Heart left ventricle (tissue), 16 donors: ENCODE measurements at regions of chr12 and their contacts with region 1.

Region 1: GRCh38 chr12:14365294-14366208 is at the start of gene ATF7IP:
- DNase-seq: peak; percentile 96 to 97 (median 97)
- ATAC-seq: peak; percentile 97 to 99 (median 98)
- H3K4me3 ChIP-seq: peak within 1 kb of the TSS; percentile 52 to 84 (median 69)
- H3K27ac ChIP-seq: peak within 1 kb of the TSS; percentile 90 to 98 (median 95)
- H3K4me1 ChIP-seq: peaks cover 0 to 25% (median 7%) of the 10 kb centered on the region in 12 donors
- H3K27me3 ChIP-seq: no peaks in the 10 kb centered on the region
- CTCF ChIP-seq: peak in 9 of 12 donors; percentile 21 to 59 (median 34)
- POLR2A ChIP-seq: peak in 1 of 2 donors; percentile 85
- total RNA-seq, gene ATF7IP: 39.8 to 82.4 (median 63.6) TPM

Region 2: DNA sequence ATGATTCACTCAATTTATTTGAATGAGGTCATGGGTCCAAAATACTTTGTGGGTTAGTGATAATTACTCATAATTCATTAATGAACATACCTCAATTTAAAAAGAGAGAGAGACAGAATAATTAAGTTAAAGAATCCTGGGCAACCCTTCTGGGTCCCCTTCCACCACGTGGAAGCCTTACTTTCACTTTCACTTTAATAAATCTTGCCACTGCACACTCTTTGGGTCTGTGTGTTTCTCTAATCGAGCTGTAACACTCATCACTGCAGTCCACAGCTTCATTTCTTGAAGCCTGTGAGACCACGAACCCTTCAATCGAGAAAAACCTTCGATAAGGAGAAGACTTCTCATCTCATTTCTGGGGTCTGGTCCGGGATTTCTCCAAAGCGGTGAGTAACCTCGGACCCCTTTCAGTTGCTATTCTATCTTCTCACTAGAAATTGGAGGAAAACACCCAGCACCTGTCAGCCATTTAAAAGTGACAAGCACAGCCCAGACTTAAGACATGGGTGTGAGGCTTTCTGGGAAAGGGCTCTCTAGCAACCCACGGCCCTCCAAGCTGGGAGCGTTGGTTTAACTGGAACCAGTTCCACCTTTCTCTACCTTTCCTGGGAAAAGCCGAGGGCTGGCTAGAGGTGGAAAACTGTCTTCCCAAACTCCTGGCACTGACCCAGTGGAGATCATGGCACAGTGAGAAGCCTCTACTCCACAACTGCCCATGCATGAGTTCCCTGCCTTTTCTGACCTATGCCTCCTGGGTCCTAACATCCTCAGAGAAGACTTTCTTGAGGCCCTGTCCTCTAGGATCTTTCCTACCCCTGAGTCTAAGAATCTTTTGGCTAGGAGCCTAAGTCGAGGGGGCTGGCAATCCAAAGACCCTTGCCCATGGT is 148.9 kb before region 1 on chr12:
- intact Hi-C with region 1: no loop called
- DNase-seq: no peak
- ATAC-seq: no peak
- H3K4me3 ChIP-seq: peak overlapping the region in 8 of 12 donors; percentile 4 to 39 (median 15)
- H3K27ac ChIP-seq: peak overlapping the region in 1 of 12 donors; percentile 28
- H3K4me1 ChIP-seq: peaks cover 0 to 6% (median 0%) of the 10 kb centered on the region in 12 donors
- H3K27me3 ChIP-seq: no peaks in the 10 kb centered on the region
- CTCF ChIP-seq: no peak
- POLR2A ChIP-seq: no peak

Region 3: DNA sequence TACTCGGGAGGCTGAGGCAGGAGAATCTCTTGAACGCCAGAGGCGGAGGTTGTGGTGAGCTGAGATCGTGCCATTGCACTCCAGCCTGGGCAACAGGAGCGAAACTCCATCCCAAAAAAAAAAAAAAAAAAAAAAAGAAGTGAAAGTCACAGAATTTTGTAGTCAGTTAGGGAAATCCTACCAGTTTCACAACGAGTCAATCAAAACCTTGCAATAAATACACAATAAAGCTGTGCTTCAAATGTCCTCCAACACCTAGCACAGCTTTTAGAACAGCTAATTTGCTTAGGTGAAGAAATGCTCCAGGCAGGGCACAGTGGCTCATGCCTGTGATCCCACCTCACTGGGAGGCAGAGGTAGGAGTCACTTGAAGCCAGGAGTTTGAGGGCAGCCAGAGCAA is 112.9 kb before region 1 on chr12:
- intact Hi-C with region 1: loop called (anchors 1 to 5 kb)
- DNase-seq: no peak
- ATAC-seq: no peak
- H3K4me3 ChIP-seq: no peak overlapping the region
- H3K27ac ChIP-seq: peak overlapping the region in 1 of 12 donors; percentile 37
- H3K4me1 ChIP-seq: peaks cover 4 to 36% (median 20%) of the 10 kb centered on the region in 12 donors
- H3K27me3 ChIP-seq: peaks cover 0 to 3% (median 0%) of the 10 kb centered on the region in 9 donors
- CTCF ChIP-seq: no peak
- POLR2A ChIP-seq: no peak

Region 4: DNA sequence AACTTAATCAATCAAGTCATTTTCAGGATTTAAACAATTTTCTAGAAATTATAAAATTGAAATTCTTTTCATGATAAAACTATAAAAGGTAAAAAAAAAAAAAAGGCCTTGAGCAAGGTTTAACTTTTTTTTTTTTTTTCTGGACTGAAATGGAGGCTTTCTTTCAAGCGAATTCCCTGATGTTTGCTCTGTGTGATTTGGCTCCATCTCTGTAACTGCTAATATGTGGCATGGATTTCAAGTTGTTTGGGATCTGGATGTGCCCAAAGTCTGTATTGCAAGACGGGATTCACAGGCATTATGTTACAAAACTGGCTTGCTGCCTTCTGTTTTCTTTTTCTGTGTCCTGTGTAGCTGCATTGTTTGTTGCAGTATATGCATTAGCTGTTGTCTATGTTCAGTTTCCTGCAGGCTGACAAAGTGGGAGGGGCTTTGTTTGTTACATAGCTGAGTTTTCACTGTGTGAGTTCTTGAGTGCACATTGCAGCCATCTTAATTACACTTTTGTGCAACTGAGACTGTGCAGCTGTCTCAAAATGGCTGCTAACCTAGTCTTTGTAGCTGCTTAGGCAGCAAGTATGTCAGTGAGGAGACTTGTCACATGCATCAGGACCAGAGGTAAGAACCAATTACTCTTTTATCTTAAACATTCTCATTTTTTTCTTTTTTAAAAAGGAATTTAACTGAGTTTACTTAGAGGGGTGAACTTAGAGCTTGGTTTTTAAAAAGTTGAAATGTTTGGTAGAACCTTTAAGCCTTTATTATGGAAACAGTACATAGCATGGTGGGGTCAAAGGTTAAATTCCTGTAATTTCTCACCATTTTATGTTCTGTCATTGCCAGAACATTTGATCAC is 19.5 kb after region 1 on chr12:
- intact Hi-C with region 1: loop called in 2 of 10 experiments (anchors 2 kb)
- DNase-seq: peak in 4 of 5 donors; percentile 43 to 64 (median 50)
- ATAC-seq: peak; percentile 95 to 97 (median 96)
- H3K4me3 ChIP-seq: peak overlapping the region; percentile 3 to 54 (median 42)
- H3K27ac ChIP-seq: peak overlapping the region; percentile 61 to 84 (median 79)
- H3K4me1 ChIP-seq: peaks cover 0 to 60% (median 17%) of the 10 kb centered on the region in 12 donors
- H3K27me3 ChIP-seq: no peaks in the 10 kb centered on the region
- CTCF ChIP-seq: no peak
- POLR2A ChIP-seq: peak in 1 of 2 donors; percentile 21

Region 5: GRCh38 chr12:14417715-14418114 is 52.2 kb after region 1 on chr12:
- intact Hi-C with region 1: loop called in 5 of 10 experiments (anchors 5 kb)
- DNase-seq: peak; percentile 63 to 83 (median 73)
- ATAC-seq: peak; percentile 67 to 88 (median 86)
- H3K4me3 ChIP-seq: peak overlapping the region in 10 of 12 donors; percentile 8 to 39 (median 18)
- H3K27ac ChIP-seq: peak overlapping the region in 11 of 12 donors; percentile 10 to 69 (median 39)
- H3K4me1 ChIP-seq: peaks cover 6 to 86% (median 56%) of the 10 kb centered on the region in 12 donors
- H3K27me3 ChIP-seq: no peaks in the 10 kb centered on the region
- CTCF ChIP-seq: no peak
- POLR2A ChIP-seq: no peak

Region 6: DNA sequence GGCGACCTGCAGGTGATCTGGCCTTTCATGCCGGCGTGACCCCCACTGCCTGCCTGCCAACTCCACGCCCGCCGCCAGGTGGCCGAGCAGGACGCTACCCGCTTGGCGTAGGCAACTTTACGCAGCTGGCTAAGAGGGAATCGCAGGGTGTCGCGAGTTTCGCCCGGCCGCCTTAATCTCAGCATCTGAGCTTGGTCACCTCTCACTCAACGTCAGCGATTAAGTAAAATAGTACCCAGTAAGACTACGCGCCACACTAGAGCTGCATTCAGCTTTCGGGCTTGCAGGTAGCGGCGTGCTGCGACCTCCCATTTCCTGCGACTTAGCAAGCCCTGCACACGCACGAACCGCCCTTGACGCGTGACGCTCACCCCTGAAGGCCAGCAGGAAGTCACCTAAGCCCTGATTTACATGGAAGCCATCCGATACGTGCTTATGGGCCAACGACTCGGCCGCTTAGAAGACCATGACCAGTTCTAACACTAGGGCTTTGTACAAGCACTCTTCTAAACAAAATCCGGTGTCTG is 404.5 kb after region 1 on chr12:
- intact Hi-C with region 1: loop called in 1 of 10 experiments (anchors 5 kb)
- DNase-seq: peak; percentile 79 to 91 (median 81)
- ATAC-seq: peak; percentile 53 to 67 (median 66)
- H3K4me3 ChIP-seq: peak overlapping the region; percentile 57 to 90 (median 84)
- H3K27ac ChIP-seq: peak overlapping the region; percentile 85 to 99 (median 96)
- H3K4me1 ChIP-seq: peaks cover 0 to 30% (median 10%) of the 10 kb centered on the region in 12 donors
- H3K27me3 ChIP-seq: no peaks in the 10 kb centered on the region
- CTCF ChIP-seq: peak; percentile 59 to 86 (median 70)
- POLR2A ChIP-seq: peak in 1 of 2 donors; percentile 28

Region 7: DNA sequence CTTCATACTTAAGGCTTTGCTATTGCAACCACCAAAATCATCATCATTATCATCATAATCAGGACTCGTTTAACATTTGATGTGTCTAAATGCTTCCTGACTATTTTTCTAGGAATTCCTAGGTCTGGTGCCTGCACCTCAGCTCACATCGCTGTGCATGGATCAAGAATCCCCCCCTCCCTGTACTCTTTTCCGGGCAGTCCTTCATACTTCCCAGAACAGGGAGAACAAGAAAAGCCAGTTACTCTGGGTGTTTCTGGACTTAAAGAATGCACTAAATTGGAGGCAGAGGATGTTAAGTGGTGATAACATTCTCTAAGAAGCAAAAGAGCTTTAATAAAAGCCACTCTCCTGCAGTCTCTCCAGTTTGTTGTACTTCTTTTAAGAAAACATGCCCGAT is 563.4 kb after region 1 on chr12:
- intact Hi-C with region 1: no loop called
- DNase-seq: no peak
- ATAC-seq: no peak
- H3K4me3 ChIP-seq: peak overlapping the region in 1 of 12 donors; percentile 7
- H3K27ac ChIP-seq: peak overlapping the region in 3 of 12 donors; percentile 16 to 22 (median 21)
- H3K4me1 ChIP-seq: peaks cover 0 to 12% (median 0%) of the 10 kb centered on the region in 12 donors
- H3K27me3 ChIP-seq: no peaks in the 10 kb centered on the region
- CTCF ChIP-seq: no peak
- POLR2A ChIP-seq: no peak